Mammary epithelial cell (primary cell): ENCODE measurements at regions of chr2 and their contacts with region 1.

Region 1: GRCh38 chr2:105454801-105455485 is 56.1 kb upstream of the FHL2 start:
- DNase-seq: peak; percentile 89
- H3K4me3 ChIP-seq: no peak overlapping the region
- H3K27ac ChIP-seq: peak overlapping the region; percentile 97
- H3K4me1 ChIP-seq: peaks cover 24% of the 10 kb centered on the region
- H3K27me3 ChIP-seq: no peaks in the 10 kb centered on the region
- CTCF ChIP-seq: peak; percentile 54 to 71

Region 2: DNA sequence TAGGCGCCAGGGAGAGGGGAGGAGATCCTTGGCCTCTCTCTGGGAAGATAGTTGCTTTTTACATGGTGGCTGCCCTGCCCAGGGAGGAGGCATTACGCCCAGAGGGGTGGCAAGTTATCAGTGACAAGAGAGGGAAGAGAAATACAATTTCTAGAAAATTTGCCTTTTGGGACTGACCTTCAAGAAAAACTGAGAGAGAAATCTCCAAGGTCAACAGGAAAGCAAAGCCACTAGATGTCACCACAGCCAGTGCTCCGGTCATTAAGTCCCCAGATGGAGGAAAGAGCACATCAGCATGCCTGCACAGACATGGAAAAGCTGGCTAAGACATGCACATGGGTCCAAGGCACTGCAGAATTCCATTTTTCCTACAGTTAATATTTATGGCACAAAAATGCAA is 77.1 kb before region 1 on chr2:
- CTCF ChIA-PET with region 1: no interaction called
- dilution Hi-C with region 1: loop called (anchors 5 kb)
- in situ Hi-C with region 1: no loop called
- intact Hi-C with region 1: no loop called
- DNase-seq: no peak
- H3K4me3 ChIP-seq: no peak overlapping the region
- H3K27ac ChIP-seq: no peak overlapping the region
- H3K4me1 ChIP-seq: peaks cover 88% of the 10 kb centered on the region
- H3K27me3 ChIP-seq: no peaks in the 10 kb centered on the region
- CTCF ChIP-seq: no peak

Region 3: GRCh38 chr2:105388971-105389381 is 66.0 kb before region 1 on chr2:
- CTCF ChIA-PET with region 1: no interaction called
- dilution Hi-C with region 1: no loop called
- in situ Hi-C with region 1: no loop called
- intact Hi-C with region 1: no loop called
- DNase-seq: no peak
- H3K4me3 ChIP-seq: no peak overlapping the region
- H3K27ac ChIP-seq: no peak overlapping the region
- H3K4me1 ChIP-seq: peaks cover 59% of the 10 kb centered on the region
- H3K27me3 ChIP-seq: no peaks in the 10 kb centered on the region
- CTCF ChIP-seq: no peak

Region 4: DNA sequence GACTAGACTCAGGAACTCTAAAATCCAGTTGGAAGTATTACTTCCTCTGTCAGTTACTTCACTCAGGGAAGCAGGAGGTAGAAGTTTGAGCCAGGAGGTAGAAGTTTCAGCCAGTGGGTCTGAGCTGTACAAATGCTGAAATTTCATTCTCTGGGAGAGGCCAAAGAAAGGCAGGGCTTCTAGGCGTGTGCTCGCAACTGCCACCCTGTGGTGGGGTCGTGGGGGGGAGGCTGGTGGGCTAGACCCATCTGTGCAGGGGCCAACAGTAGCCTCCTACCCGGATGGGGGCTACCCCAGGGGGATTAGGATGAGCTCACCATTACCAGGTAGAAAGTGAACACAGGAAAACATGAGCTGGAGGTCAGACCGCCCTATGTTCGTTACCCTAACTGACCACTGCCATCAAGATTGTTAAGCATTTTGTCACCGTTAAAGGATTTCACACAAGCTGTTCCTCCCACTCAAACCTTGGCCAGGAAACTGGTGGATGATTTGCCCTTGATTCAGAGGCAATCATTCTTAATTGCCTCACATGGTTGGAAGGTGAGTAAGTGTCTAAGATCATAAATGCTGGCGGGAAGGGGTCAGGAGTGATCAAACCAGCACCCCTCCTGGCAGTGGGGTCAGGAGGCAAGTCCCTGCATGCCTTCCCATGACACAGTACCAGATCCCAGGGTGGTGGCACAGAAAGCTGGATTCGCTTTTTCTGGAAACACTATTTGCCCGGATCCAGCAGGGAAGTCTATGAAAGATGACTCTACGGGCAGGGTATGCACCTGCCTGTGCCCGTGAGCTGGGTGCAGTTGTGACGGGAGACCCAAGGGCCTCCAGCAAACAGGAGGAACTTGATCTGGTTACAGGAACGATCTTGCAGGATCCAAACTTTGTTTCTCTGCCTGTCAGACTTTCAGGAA is 50.9 kb before region 1 on chr2:
- CTCF ChIA-PET with region 1: interaction called, 4 read pairs
- dilution Hi-C with region 1: no loop called
- in situ Hi-C with region 1: loop called (anchors 5 kb)
- intact Hi-C with region 1: loop called (anchors 1 kb)
- DNase-seq: peak; percentile 99
- H3K4me3 ChIP-seq: peak overlapping the region in 2 of 3 experiments; percentile 2 to 11
- H3K27ac ChIP-seq: peak overlapping the region; percentile 96
- H3K4me1 ChIP-seq: peaks cover 64% of the 10 kb centered on the region
- H3K27me3 ChIP-seq: no peaks in the 10 kb centered on the region
- CTCF ChIP-seq: peak in 1 of 2 donors; percentile 61

Region 5: GRCh38 chr2:105515581-105516415 is 60.9 kb after region 1 on chr2:
- CTCF ChIA-PET with region 1: no interaction called
- dilution Hi-C with region 1: no loop called
- in situ Hi-C with region 1: loop called in 1 of 2 experiments (anchors 10 kb)
- intact Hi-C with region 1: loop called (anchors 1 kb)
- DNase-seq: peak; percentile 35
- H3K4me3 ChIP-seq: no peak overlapping the region
- H3K27ac ChIP-seq: no peak overlapping the region
- H3K4me1 ChIP-seq: peaks cover 13% of the 10 kb centered on the region
- H3K27me3 ChIP-seq: no peaks in the 10 kb centered on the region
- CTCF ChIP-seq: no peak

Region 6: DNA sequence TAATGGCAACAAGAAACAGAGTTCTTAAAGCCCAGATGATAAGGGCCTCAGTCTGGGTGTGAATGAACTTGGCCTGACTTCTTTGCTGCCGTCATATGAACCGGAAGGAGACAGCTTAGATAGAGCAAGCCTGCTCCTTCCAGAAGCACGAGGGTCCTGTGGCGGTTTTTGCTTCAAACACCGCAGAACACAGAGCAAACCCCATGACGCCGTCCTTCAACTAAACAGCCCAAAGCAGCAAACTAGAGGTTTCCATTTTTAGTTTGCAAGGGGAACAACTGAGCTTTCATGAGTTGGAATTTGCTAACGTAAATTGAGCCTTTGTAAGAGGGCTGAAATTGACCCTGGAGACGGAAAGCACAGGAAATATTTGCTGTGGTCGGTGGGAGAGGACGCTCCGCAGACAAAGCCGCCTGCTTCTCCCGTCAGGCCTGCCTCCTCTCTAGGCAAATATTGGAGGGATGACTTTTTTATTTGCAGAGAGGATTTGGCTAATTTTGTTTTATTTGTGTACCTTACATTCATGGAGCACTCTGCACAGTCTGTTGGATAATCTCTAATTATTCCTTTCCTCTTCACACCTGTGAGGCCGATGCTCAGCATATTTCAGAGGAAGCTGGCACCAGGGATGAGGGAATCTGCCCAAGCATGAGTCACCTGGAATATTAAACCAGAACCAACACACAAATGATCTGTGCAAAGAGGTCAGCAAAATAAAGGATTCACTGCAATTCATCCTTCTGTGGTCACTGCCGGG is 155.8 kb after region 1 on chr2:
- CTCF ChIA-PET with region 1: interaction called, 12 read pairs
- dilution Hi-C with region 1: no loop called
- in situ Hi-C with region 1: no loop called
- intact Hi-C with region 1: no loop called
- DNase-seq: peak; percentile 11
- H3K4me3 ChIP-seq: no peak overlapping the region
- H3K27ac ChIP-seq: no peak overlapping the region
- H3K4me1 ChIP-seq: no peaks in the 10 kb centered on the region
- H3K27me3 ChIP-seq: no peaks in the 10 kb centered on the region
- CTCF ChIP-seq: no peak

Region 7: GRCh38 chr2:105725388-105725787 is 270.4 kb after region 1 on chr2:
- CTCF ChIA-PET with region 1: no interaction called
- dilution Hi-C with region 1: no loop called
- in situ Hi-C with region 1: no loop called
- intact Hi-C with region 1: no loop called
- DNase-seq: no peak
- H3K4me3 ChIP-seq: no peak overlapping the region
- H3K27ac ChIP-seq: no peak overlapping the region
- H3K4me1 ChIP-seq: no peaks in the 10 kb centered on the region
- H3K27me3 ChIP-seq: no peaks in the 10 kb centered on the region
- CTCF ChIP-seq: no peak